Panc1 (cell line): ENCODE measurements at regions of chr1 and their contacts with region 1.

Region 1: GRCh38 chr1:25871086-25871708 is 4.3 kb downstream of the PAQR7 start:
- DNase-seq: no peak
- ATAC-seq: no peak
- H3K4me3 ChIP-seq: no peak overlapping the region
- H3K27ac ChIP-seq: peak overlapping the region; percentile 60
- H3K4me1 ChIP-seq: peaks cover 37% of the 10 kb centered on the region
- H3K27me3 ChIP-seq: no peaks in the 10 kb centered on the region
- CTCF ChIP-seq: no peak

Region 2: DNA sequence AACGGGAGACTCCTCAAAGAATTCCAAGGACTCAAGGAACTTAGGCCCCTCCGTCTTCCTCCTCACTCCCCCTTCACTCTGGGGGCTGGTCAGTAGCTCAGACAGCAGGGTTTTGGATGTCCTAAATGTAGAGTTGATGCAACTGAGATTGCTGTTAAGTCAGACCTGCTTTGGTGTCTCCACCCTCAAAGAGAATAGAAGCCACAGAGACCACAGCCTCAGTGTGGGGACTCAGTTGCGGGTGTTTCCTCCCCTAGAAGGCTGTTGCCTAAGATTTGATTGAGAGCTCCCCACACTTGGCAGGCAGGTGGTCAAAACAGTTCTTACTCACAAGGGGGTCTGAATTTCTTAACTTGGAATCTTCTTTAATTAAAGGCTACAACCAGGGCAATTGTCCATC is 247.0 kb before region 1 on chr1:
- CTCF ChIA-PET with region 1: no interaction called
- POLR2A ChIA-PET with region 1: interaction called, 11 read pairs
- in situ Hi-C with region 1: no loop called
- intact Hi-C with region 1: no loop called
- DNase-seq: no peak
- ATAC-seq: no peak
- H3K4me3 ChIP-seq: no peak overlapping the region
- H3K27ac ChIP-seq: no peak overlapping the region
- H3K4me1 ChIP-seq: no peaks in the 10 kb centered on the region
- H3K27me3 ChIP-seq: peaks cover 4% of the 10 kb centered on the region; the same call in 1 of the 2 replicates
- CTCF ChIP-seq: no peak

Region 3: GRCh38 chr1:25895365-25895993 is 24.3 kb after region 1 on chr1:
- CTCF ChIA-PET with region 1: interaction called, 13 read pairs
- POLR2A ChIA-PET with region 1: no interaction called
- in situ Hi-C with region 1: no loop called
- intact Hi-C with region 1: no loop called
- DNase-seq: peak; percentile 64
- ATAC-seq: peak; percentile 81
- H3K4me3 ChIP-seq: no peak overlapping the region
- H3K27ac ChIP-seq: peak overlapping the region; percentile 74
- H3K4me1 ChIP-seq: peaks cover 47% of the 10 kb centered on the region
- H3K27me3 ChIP-seq: no peaks in the 10 kb centered on the region
- CTCF ChIP-seq: peak; percentile 98